Activated CD8-positive, alpha-beta T cell treated with anti-CD3 and anti-CD28 coated beads for 36 hours (primary cell): ENCODE measurements at regions of chr1 and their contacts with region 1.

Region 1: GRCh38 chr1:246689409-246690008 is 34.7 kb upstream of the SCCPDH start:
- DNase-seq: peak; percentile 67
- ATAC-seq: peak; percentile 99
- H3K4me3 Mint-ChIP-seq: no peak overlapping the region
- H3K27ac Mint-ChIP-seq: no peak overlapping the region
- H3K4me1 Mint-ChIP-seq: no peaks in the 10 kb centered on the region
- H3K27me3 Mint-ChIP-seq: no peaks in the 10 kb centered on the region
- CTCF ChIP-seq: peak; percentile 79

Region 2: DNA sequence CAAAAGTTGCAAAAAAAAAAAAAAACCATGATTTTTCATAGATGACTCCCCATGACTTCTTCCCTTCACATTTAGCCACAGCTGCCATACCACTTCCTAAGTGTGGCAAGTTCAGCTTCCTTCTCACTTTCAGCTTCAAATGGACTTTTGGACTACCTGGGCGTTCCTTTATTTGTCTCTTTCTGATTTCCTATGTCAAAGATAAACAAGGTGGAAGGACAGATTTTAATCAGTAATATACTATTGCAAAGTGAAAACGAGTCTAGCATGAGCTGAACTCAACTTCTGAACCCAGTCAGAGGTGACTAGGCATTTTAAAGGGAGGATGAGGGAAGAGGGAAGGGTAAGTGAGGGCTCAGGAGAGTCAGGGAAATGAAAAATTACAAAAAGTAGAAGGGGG is 20.3 kb after region 1 on chr1:
- CTCF ChIA-PET with region 1: interaction called, 10 read pairs
- POLR2A ChIA-PET with region 1: no interaction called
- intact Hi-C with region 1: no loop called
- DNase-seq: no peak
- ATAC-seq: no peak
- H3K4me3 Mint-ChIP-seq: no peak overlapping the region
- H3K27ac Mint-ChIP-seq: no peak overlapping the region
- H3K4me1 Mint-ChIP-seq: peaks cover 2% of the 10 kb centered on the region
- H3K27me3 Mint-ChIP-seq: peaks cover 6% of the 10 kb centered on the region
- CTCF ChIP-seq: no peak

Region 3: DNA sequence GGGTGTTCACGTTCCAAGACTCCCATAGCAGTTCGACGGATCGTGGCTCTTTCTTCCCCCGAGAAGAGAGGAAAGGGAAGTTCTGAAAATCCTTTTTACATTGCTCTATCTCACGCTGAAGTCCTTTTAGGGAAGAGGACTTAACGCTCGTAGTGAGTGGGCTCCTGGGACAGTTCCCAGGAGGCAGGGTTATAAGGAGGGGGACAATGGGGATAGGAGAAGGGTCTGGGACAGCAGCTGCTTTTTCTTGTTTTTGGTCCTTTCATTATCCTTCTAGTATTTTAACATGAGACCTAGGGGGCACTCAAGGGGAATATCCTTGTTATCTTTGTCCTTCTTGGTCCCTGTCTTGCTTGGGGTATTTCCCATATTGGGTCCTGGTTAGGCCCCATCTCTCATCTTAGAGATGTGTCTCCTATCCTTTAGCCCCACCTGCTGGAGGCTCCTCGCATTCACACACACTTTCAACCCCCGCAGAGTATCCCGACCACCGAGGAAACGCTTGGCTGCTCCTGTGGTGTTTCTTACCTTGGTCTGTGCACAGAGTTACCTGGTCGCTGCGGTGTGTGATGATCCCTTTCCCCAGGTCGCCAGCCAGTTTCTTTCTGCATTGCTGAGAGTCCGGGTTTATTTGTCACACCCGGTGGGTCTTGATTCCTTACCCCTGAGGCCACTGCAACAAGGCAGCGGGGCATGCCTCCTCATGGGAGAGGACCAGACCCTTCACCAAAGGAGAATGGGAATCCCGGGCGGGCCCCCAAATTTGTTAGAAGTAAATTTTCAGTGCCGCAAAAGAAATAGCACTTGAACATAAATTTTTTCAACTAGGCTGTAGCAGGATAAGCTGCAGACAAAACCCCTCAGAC is 64.4 kb after region 1 on chr1:
- CTCF ChIA-PET with region 1: interaction called, 10 read pairs
- POLR2A ChIA-PET with region 1: no interaction called
- intact Hi-C with region 1: no loop called
- DNase-seq: peak; percentile 80
- ATAC-seq: peak; percentile 99
- H3K4me3 Mint-ChIP-seq: no peak overlapping the region
- H3K27ac Mint-ChIP-seq: no peak overlapping the region
- H3K4me1 Mint-ChIP-seq: no peaks in the 10 kb centered on the region
- H3K27me3 Mint-ChIP-seq: no peaks in the 10 kb centered on the region
- CTCF ChIP-seq: peak; percentile 71